ENCODE measurements at regions of chr15 and their contacts with region 1.

Region 1: GRCh38 chr15:80567721-80568157 is 127.4 kb upstream of the ABHD17C start:
- DNase-seq: peak in 6 of 10 donors; percentile 34 to 79 (median 62)
- H3K4me3 ChIP-seq: no peak overlapping the region
- H3K27ac ChIP-seq: peak overlapping the region in 35 of 59 donors; percentile 2 to 77 (median 42)
- H3K27me3 ChIP-seq: no peaks in the 10 kb centered on the region
- CTCF ChIP-seq: peak; percentile 27 to 83 (median 73)

Region 2: DNA sequence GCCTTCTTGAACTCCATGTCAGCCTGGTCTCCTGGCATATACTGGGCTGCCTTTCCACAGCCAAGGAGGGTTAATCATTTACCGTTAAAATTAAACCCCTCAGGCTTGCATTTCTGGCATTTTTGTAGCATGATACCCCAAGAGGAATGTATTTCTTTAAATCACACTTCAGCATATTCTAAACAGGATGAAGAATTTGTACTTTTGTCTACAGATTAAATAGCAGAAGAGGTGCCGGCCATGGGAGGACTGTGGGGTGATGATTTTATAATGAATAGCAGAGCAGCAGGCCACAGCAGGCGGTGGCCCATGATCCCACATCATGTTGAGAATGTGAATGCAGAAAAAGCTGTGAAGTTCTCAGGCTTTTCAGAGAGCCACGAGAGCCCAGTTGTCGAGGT is 73.4 kb before region 1 on chr15:
- intact Hi-C with region 1: no loop called
- DNase-seq: no peak
- H3K4me3 ChIP-seq: no peak overlapping the region
- H3K27ac ChIP-seq: peak overlapping the region in 21 of 59 donors; percentile 5 to 69 (median 35)
- H3K27me3 ChIP-seq: no peaks in the 10 kb centered on the region
- CTCF ChIP-seq: no peak

Region 3: DNA sequence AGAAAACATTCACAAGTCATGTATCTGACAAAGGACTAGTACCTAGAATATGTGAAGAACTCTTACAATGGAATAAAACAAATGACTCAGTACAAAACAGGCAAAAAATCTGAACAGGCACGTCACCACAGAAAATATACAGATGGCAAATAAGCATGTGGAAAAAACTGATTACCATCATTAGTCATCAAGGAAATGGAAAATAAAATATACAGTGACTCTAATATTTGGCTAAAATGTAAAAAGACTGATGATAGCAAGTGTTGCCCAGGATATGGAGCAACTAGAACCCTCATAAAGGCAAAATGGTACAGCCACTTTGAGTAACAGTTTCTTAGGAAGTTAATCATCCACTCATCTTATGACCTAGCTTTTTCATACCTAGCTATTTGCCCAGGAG is 31.6 kb after region 1 on chr15:
- intact Hi-C with region 1: no loop called
- DNase-seq: no peak
- H3K4me3 ChIP-seq: no peak overlapping the region
- H3K27ac ChIP-seq: no peak overlapping the region
- H3K27me3 ChIP-seq: no peaks in the 10 kb centered on the region
- CTCF ChIP-seq: no peak

Region 4: DNA sequence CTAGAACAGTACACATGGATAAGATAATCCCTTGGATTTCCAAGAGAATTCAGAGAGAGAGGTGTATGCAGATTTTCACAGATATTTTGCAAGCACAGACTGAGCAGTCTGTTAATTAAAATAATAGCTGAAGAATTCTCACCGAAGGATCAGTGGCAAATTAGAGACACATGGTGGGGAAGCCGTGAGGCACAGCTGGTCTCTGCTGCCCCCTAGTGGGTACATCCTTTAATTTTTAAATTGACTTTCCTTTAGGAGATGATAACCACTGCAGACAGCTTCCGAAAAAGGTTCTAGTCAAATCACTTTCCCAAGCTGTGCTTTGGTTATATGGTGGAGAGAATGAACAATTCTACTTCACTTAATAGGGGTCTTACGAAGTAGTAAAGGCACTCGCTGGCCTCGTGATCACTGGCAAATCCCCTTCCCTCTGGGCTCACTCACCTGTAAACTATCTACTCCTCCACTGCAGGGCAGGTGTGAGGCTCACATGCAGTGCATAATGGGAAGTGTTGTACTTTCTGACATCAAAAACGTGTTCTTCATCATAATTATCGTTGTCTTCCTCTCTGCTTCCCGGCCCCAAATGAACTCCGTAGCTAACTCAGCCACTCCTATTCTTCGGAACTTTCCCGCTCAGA is 402.4 kb after region 1 on chr15:
- intact Hi-C with region 1: loop called in 1 of 2 experiments (anchors 2 kb)
- DNase-seq: peak in 6 of 10 donors; percentile 51 to 80 (median 67)
- H3K4me3 ChIP-seq: no peak overlapping the region
- H3K27ac ChIP-seq: no peak overlapping the region
- H3K27me3 ChIP-seq: no peaks in the 10 kb centered on the region
- CTCF ChIP-seq: peak; percentile 80 to 98 (median 92)

Region 5: GRCh38 chr15:81256916-81257315 is 689.2 kb after region 1 on chr15:
- intact Hi-C with region 1: loop called in 1 of 2 experiments (anchors 5 kb)
- DNase-seq: no peak
- H3K4me3 ChIP-seq: no peak overlapping the region
- H3K27ac ChIP-seq: no peak overlapping the region
- H3K27me3 ChIP-seq: peaks cover 0 to 4% (median 0%) of the 10 kb centered on the region in 45 donors
- CTCF ChIP-seq: peak; percentile 13 to 74 (median 56)

Region 6: GRCh38 chr15:81394603-81395002 is 826.9 kb after region 1 on chr15:
- intact Hi-C with region 1: no loop called
- DNase-seq: no peak
- H3K4me3 ChIP-seq: no peak overlapping the region
- H3K27ac ChIP-seq: no peak overlapping the region
- H3K27me3 ChIP-seq: no peaks in the 10 kb centered on the region
- CTCF ChIP-seq: no peak

Measured in dorsolateral prefrontal cortex (tissue), 120 donors.